ENCODE measurements at regions of chr2 and their contacts with region 1.

Region 1: GRCh38 chr2:218301176-218301819 is 9.0 kb upstream of the TMBIM1 start:
- DNase-seq: peak; percentile 77 to 91 (median 80)
- H3K4me3 ChIP-seq: no peak overlapping the region
- H3K4me3 Mint-ChIP-seq: peak overlapping the region in 1 of 7 donors; percentile 11
- H3K27ac ChIP-seq: no peak overlapping the region
- H3K27ac Mint-ChIP-seq: peak overlapping the region in 6 of 8 donors; percentile 1 to 70 (median 28)
- H3K4me1 ChIP-seq: peaks cover 6% of the 10 kb centered on the region
- H3K4me1 Mint-ChIP-seq: peaks cover 3 to 8% (median 7%) of the 10 kb centered on the region in 3 donors
- H3K27me3 ChIP-seq: no peaks in the 10 kb centered on the region
- H3K27me3 Mint-ChIP-seq: no peaks in the 10 kb centered on the region

Region 2: DNA sequence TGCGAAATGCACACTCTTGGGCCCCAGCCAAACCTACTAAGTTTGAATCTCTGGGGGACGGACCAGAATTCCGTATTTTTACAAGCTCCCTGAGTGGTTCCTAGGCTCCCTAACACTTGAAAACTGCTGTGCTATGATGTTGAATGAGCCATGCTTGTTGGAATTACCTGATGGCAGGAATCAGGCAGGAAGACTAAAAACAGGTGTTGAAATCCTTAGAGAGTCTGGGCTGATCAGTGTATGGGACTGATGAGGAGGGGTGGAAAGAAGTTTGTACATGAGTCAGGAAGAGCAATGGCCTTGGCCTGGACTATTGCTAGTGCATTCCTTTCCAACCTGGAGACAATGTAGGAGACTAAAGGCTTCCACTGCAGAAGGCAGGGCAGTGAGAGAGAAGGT is 15.9 kb after region 1 on chr2:
- CTCF ChIA-PET with region 1: interaction called, 12 read pairs
- POLR2A ChIA-PET with region 1: no interaction called
- DNase-seq: no peak
- H3K4me3 ChIP-seq: peak overlapping the region; percentile 37
- H3K4me3 Mint-ChIP-seq: peak overlapping the region in 4 of 7 donors; percentile 6 to 83 (median 30)
- H3K27ac ChIP-seq: no peak overlapping the region
- H3K27ac Mint-ChIP-seq: peak overlapping the region in 7 of 8 donors; percentile 1 to 89 (median 71)
- H3K4me1 ChIP-seq: peaks cover 35% of the 10 kb centered on the region
- H3K4me1 Mint-ChIP-seq: peaks cover 27 to 37% (median 28%) of the 10 kb centered on the region in 3 donors
- H3K27me3 ChIP-seq: no peaks in the 10 kb centered on the region
- H3K27me3 Mint-ChIP-seq: peaks cover 0 to under 1% of the 10 kb centered on the region in 2 donors